Esophagus muscularis mucosa (tissue), 4 donors: ENCODE measurements at regions of chr19 and their contacts with region 1.

Region 1: GRCh38 chr19:45008552-45008951 is 7.3 kb downstream of the RELB start:
- DNase-seq: no peak
- H3K4me3 ChIP-seq: no peak overlapping the region
- H3K27ac ChIP-seq: no peak overlapping the region
- H3K4me1 ChIP-seq: no peaks in the 10 kb centered on the region
- H3K27me3 ChIP-seq: no peaks in the 10 kb centered on the region
- CTCF ChIP-seq: no peak
- EP300 ChIP-seq: no peak
- POLR2A ChIP-seq: no peak

Region 2: DNA sequence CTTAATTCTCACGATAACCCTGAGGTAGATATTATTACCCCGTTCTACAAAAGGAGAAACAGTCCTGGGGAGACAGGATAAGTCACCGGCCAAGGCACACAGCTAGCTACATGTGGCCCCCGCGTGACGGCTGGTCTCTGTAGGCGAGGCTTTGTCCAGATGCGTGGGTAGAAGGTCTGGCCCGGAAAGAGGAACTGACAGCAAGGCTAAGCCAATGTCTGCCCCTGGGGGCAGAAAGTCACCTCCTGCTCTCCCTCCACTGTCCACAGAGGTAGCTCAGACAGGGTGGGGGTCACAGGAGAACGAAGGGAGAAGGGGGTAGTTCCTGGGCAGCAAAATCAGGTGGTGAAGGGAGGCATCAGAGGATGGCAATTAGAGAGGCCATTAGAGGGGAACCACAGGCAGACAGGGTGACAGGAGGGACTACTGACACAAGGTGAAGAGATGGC is 64.7 kb before region 1 on chr19:
- intact Hi-C with region 1: no loop called
- DNase-seq: no peak
- H3K4me3 ChIP-seq: no peak overlapping the region
- H3K27ac ChIP-seq: no peak overlapping the region
- H3K4me1 ChIP-seq: no peaks in the 10 kb centered on the region
- H3K27me3 ChIP-seq: no peaks in the 10 kb centered on the region
- CTCF ChIP-seq: no peak
- EP300 ChIP-seq: no peak
- POLR2A ChIP-seq: no peak

Region 3: GRCh38 chr19:45040059-45040771 is 31.7 kb after region 1 on chr19:
- intact Hi-C with region 1: loop called (anchors 5 kb)
- DNase-seq: no peak
- H3K4me3 ChIP-seq: peak overlapping the region; percentile 78 to 86 (median 82)
- H3K27ac ChIP-seq: peak overlapping the region in 3 of 4 donors; percentile 91 to 96 (median 94)
- H3K4me1 ChIP-seq: peaks cover 33 to 53% (median 47%) of the 10 kb centered on the region in 4 donors
- H3K27me3 ChIP-seq: no peaks in the 10 kb centered on the region
- CTCF ChIP-seq: no peak
- EP300 ChIP-seq: no peak
- POLR2A ChIP-seq: no peak